ENCODE measurements at regions of chr19 and their contacts with region 1.

Region 1: DNA sequence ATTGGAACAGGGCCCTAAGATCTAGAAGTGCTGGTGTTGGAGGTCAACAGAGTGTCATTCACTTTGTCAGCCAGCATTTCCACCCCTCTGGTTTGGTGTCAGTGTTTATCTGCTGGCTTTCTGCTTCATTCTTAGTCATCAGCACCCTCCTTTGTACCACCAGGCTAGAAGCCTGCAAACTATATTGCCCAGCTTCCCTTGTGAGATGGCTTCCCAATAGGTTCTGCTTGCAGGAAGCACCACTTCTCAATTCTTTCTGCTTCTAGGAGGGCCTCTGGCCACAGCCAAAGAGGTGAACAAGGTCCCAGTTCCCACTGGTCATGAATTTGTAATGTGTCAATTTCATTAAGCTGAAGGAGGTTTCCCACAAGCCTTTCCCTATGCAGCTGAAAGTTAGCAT is 36.4 kb upstream of the CALM3 start:
- DNase-seq: no peak
- ATAC-seq: no peak
- H3K4me3 ChIP-seq: no peak overlapping the region
- H3K4me3 Mint-ChIP-seq: no peak overlapping the region
- H3K27ac ChIP-seq: no peak overlapping the region
- H3K27ac Mint-ChIP-seq: no peak overlapping the region
- H3K4me1 ChIP-seq: no peaks in the 10 kb centered on the region
- H3K4me1 Mint-ChIP-seq: peaks cover 2 to 6% (median 2%) of the 10 kb centered on the region in 3 donors
- H3K27me3 ChIP-seq: no peaks in the 10 kb centered on the region
- H3K27me3 Mint-ChIP-seq: peaks cover 0 to under 1% of the 10 kb centered on the region in 2 donors

Region 2: DNA sequence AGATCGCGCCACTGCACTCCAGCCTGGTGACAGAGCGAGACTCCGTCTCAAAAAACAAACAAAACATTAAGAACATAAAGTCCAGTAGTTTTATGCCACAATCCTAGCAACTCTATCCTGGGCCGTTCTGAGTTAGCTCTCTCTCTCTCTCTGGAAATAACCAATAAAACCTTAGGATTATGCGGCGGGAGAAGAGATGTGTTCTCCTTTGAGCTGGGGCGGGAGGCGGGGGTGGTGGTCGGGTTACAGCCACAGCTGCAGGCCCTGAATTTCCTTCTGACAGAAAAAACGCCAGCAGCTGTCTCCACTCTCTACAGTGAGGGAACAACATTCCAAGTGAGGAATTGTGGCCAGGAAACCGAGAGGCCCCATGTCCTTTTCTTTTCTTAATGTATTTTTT is 84.3 kb before region 1 on chr19:
- CTCF ChIA-PET with region 1: interaction called in 1 of 2 experiments, 14 read pairs
- POLR2A ChIA-PET with region 1: no interaction called
- DNase-seq: no peak
- ATAC-seq: no peak
- H3K4me3 ChIP-seq: no peak overlapping the region
- H3K4me3 Mint-ChIP-seq: no peak overlapping the region
- H3K27ac ChIP-seq: no peak overlapping the region
- H3K27ac Mint-ChIP-seq: no peak overlapping the region
- H3K4me1 ChIP-seq: no peaks in the 10 kb centered on the region
- H3K4me1 Mint-ChIP-seq: peaks cover 0 to 5% (median 0%) of the 10 kb centered on the region in 3 donors
- H3K27me3 ChIP-seq: peaks cover 0 to 36% of the 10 kb centered on the region in 2 experiments
- H3K27me3 Mint-ChIP-seq: peaks cover 38 to 44% of the 10 kb centered on the region in 2 donors

Region 3: GRCh38 chr19:46495787-46496101 is 69.0 kb before region 1 on chr19 and contains the start of gene PNMA8B:
- CTCF ChIA-PET with region 1: no interaction called
- POLR2A ChIA-PET with region 1: no interaction called
- DNase-seq: peak in 31 of 35 experiments; percentile 13 to 72 (median 40)
- ATAC-seq: peak; percentile 27 to 71 (median 42)
- H3K4me3 ChIP-seq: peak within 1 kb of the TSS in 1 of 2 donors; percentile 26
- H3K4me3 Mint-ChIP-seq: peak within 1 kb of the TSS; percentile 64 to 86 (median 79)
- H3K27ac ChIP-seq: no peak within 1 kb of the TSS
- H3K27ac Mint-ChIP-seq: peak within 1 kb of the TSS in 1 of 2 donors; percentile 31
- H3K4me1 ChIP-seq: peaks cover 5 to 39% of the 10 kb centered on the region in 2 experiments
- H3K4me1 Mint-ChIP-seq: peaks cover 16 to 21% (median 21%) of the 10 kb centered on the region in 3 donors
- H3K27me3 ChIP-seq: peaks cover 6 to 65% of the 10 kb centered on the region in 2 experiments
- H3K27me3 Mint-ChIP-seq: peaks cover 31 to 48% of the 10 kb centered on the region in 2 donors
- total RNA-seq, gene PNMA8B: 0.20 to 1.1 (median 0.44) TPM

Measured in T-cell (primary cell).